ENCODE measurements at regions of chr6 and their contacts with region 1.

Region 1: DNA sequence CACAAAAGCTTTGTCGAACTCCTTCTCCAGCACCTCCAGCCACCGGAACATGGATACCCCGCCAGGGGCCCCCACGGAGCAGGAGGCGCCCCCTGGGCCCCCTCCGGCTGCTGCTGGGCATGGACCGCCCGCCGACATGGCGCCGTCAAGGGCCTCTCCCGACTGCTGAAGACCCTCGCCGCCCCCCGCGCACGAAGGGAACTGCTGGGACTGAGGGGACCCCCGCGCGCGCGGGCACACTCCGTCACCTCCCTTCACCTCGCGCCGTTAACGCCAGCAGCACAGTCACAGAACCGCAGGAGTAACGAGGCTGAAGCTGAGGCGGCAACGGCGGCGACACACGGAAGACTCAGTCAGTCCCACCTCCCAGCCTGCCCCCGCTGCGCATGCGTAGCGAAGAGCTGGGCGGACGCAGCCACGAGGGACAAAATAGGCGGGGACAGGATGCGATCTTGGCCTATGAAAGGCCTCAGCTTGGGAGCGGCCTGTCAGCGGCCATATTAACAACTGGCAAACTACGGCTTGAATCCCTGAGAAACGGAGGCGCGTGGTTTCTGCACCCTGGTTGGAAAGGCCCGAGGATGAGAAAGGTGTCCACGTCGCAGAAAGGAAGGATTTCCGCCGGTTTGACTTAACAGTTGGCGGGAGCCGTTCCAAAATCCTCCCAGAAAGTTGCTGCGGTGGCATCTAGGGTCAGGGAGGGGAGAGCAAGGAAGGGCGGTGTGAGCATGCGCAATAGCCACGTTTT is at the start of gene GOPC:
- H3K4me3 ChIP-seq: peak within 1 kb of the TSS; percentile 82
- H3K27ac ChIP-seq: peak within 1 kb of the TSS; percentile 75
- H3K4me1 ChIP-seq: no peaks in the 10 kb centered on the region
- CTCF ChIP-seq: peak; percentile 96

Region 2: GRCh38 chr6:117399924-117400323 is 202.4 kb before region 1 on chr6:
- CTCF ChIA-PET with region 1: interaction called, 24 read pairs
- POLR2A ChIA-PET with region 1: interaction called, 4 read pairs
- H3K4me3 ChIP-seq: no peak overlapping the region
- H3K27ac ChIP-seq: no peak overlapping the region
- H3K4me1 ChIP-seq: no peaks in the 10 kb centered on the region
- CTCF ChIP-seq: peak; percentile 36; the same call in 1 of the 2 replicates

Region 3: DNA sequence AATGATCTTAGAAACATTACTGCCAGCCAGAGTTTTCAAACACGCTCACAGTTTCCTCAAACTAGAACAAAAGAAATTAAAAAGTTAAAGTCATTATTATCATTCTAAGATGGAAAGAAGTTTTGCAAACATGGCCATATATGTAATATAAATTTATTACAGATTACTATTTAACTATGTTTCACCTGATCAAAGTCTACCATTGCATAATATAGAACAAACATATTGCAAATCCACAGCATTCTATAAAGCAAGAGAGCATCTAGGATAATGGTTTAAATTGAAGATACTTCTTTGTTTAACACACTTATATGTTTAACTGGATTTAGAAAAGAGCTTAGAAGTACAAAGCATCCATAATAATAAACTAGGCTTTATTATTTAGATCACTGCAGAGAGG is 146.1 kb before region 1 on chr6:
- CTCF ChIA-PET with region 1: interaction called, 106 read pairs
- POLR2A ChIA-PET with region 1: interaction called, 3 read pairs
- H3K4me3 ChIP-seq: no peak overlapping the region
- H3K27ac ChIP-seq: no peak overlapping the region
- H3K4me1 ChIP-seq: no peaks in the 10 kb centered on the region
- CTCF ChIP-seq: no peak

Region 4: DNA sequence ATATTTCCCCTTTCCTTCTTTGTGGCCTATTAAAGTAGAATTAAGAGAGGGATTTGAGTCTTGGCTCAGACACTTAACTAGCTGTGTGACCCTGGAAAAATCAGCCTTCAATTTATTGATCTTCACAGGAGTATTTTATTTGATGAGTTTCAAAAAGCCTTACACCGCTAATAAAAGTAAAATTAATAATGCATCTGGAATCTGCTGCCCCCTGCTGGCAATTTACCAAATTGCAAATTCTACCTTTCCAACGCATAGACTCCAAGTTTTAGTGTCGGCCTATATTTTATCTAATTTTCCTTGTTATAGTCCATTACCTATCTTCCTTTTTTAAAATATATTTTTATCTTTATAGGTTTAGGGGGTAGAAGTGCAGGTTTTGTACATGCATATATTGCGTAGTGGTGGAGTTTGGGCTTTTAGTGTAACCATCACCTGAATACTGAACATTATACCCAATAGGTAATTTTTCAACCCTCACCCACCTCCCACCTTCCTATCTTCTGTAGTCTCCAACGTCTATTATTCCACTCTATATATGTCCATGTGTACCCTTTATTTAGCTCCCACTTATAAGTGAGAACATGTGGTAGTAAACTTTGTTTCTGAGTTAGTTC is 46.3 kb before region 1 on chr6:
- CTCF ChIA-PET with region 1: interaction called, 12 read pairs
- POLR2A ChIA-PET with region 1: interaction called, 4 read pairs
- H3K4me3 ChIP-seq: no peak overlapping the region
- H3K27ac ChIP-seq: no peak overlapping the region
- H3K4me1 ChIP-seq: no peaks in the 10 kb centered on the region
- CTCF ChIP-seq: no peak

Region 5: GRCh38 chr6:117613920-117614560 is 11.7 kb after region 1 on chr6:
- CTCF ChIA-PET with region 1: interaction called, 11 read pairs
- POLR2A ChIA-PET with region 1: no interaction called
- H3K4me3 ChIP-seq: no peak overlapping the region
- H3K27ac ChIP-seq: no peak overlapping the region
- H3K4me1 ChIP-seq: no peaks in the 10 kb centered on the region
- CTCF ChIP-seq: no peak